Vagina (tissue), 2 donors: ENCODE measurements at regions of chr4 and their contacts with region 1.

Region 1: DNA sequence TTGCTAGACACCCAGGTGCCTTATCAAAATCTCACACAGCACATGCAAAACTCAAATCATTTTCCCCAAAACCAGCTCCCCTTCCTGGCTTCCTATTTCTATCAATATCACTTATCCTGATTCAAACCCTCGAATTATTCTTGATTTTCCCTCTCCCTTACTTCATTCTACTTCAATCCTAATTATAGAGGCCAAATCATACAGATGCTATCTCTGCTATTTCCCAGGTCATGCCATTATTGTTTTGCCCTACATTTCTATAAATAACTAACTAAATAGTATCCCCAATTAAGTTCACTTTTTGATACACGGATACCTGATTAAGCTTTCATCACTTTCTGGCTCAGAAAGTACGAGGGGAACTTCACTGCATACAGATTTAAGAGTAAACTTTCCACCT is 62.4 kb downstream of the FBXL5 start:
- DNase-seq: no peak
- H3K4me3 ChIP-seq: no peak overlapping the region
- H3K27ac ChIP-seq: no peak overlapping the region
- H3K4me1 ChIP-seq: no peaks in the 10 kb centered on the region
- H3K27me3 ChIP-seq: no peaks in the 10 kb centered on the region
- CTCF ChIP-seq: no peak
- POLR2A ChIP-seq: no peak

Region 2: DNA sequence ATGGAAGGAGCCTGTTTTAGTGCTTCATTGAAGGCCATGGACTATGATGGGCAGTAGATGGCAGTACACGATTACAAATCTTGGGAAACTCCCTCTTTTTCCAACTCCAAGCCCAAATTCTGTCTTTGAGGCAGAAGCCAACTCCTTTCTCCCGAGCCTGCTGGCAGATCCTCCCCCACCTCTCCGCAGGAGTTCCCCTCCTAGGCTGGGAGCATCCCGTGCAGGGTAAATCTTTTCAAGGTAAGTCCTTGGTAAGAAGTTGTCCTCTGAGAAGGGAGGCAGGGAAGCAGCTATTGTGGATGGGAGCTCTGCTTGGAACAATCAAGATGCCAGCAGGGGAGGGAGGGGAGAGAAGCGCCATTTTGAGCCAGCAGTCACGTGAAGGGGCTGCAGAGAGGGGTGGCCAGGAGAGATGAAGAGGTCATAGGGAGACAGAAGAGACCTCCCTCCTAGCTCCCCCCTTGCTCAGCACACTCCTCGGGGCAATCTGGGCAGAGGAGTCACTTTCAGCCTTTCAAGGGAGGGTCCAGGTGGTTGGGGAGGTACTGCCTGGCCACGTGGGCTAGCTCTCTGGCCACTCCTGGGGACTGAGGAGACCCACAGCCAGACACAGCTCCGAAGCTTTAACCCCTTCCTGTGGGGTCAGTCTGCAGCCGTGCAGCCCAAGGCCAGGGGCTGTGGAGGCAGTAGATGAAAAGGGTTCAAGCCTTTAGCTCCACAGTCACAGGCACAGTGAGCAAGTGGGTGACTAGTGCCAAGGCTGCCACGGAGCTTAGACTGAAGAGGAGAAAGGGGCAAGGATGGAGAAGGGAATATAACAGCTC is 113.5 kb before region 1 on chr4:
- intact Hi-C with region 1: no loop called
- DNase-seq: no peak
- H3K4me3 ChIP-seq: peak overlapping the region; percentile 43 to 51
- H3K27ac ChIP-seq: peak overlapping the region; percentile 91
- H3K4me1 ChIP-seq: peaks cover 18% of the 10 kb centered on the region
- H3K27me3 ChIP-seq: no peaks in the 10 kb centered on the region
- CTCF ChIP-seq: peak; percentile 19 to 60 (median 53)
- POLR2A ChIP-seq: no peak

Region 3: GRCh38 chr4:15714646-15715435 is 122.0 kb after region 1 on chr4:
- intact Hi-C with region 1: no loop called
- DNase-seq: no peak
- H3K4me3 ChIP-seq: no peak overlapping the region
- H3K27ac ChIP-seq: no peak overlapping the region
- H3K4me1 ChIP-seq: no peaks in the 10 kb centered on the region
- H3K27me3 ChIP-seq: no peaks in the 10 kb centered on the region
- CTCF ChIP-seq: no peak
- POLR2A ChIP-seq: no peak

Region 4: GRCh38 chr4:15901998-15902397 is 309.2 kb after region 1 on chr4:
- intact Hi-C with region 1: loop called (anchors 5 kb)
- DNase-seq: no peak
- H3K4me3 ChIP-seq: no peak overlapping the region
- H3K27ac ChIP-seq: no peak overlapping the region
- H3K4me1 ChIP-seq: peaks cover 1% of the 10 kb centered on the region
- H3K27me3 ChIP-seq: no peaks in the 10 kb centered on the region
- CTCF ChIP-seq: no peak
- POLR2A ChIP-seq: no peak